Naive thymus-derived CD8-positive, alpha-beta T cell (primary cell): ENCODE measurements at regions of chrX and their contacts with region 1.

Region 1: GRCh38 chrX:107627838-107628661 is at the start of gene PRPS1:
- DNase-seq: peak; percentile 69 to 94 (median 86)
- ATAC-seq: peak; percentile 95 to 96
- H3K4me3 Mint-ChIP-seq: peak within 1 kb of the TSS; percentile 87 to 97 (median 94)
- H3K27ac Mint-ChIP-seq: peak within 1 kb of the TSS; percentile 87 to 97 (median 94)
- H3K4me1 Mint-ChIP-seq: peaks cover 8 to 41% (median 30%) of the 10 kb centered on the region in 4 donors
- H3K27me3 Mint-ChIP-seq: no peaks in the 10 kb centered on the region
- polyA plus RNA-seq, gene PRPS1: 53.8 to 61.6 (median 56.7) TPM

Region 2: GRCh38 chrX:107672955-107673378 is 44.9 kb after region 1 on chrX:
- POLR2A ChIA-PET with region 1: interaction called, 11 read pairs
- DNase-seq: peak; percentile 52 to 94 (median 86)
- ATAC-seq: peak; percentile 28 to 51
- H3K4me3 Mint-ChIP-seq: peak overlapping the region; percentile 70 to 94 (median 84)
- H3K27ac Mint-ChIP-seq: peak overlapping the region; percentile 91 to 100 (median 98)
- H3K4me1 Mint-ChIP-seq: peaks cover 17 to 60% (median 52%) of the 10 kb centered on the region in 4 donors
- H3K27me3 Mint-ChIP-seq: peaks cover 0 to 2% (median 0%) of the 10 kb centered on the region in 5 donors

Region 3: DNA sequence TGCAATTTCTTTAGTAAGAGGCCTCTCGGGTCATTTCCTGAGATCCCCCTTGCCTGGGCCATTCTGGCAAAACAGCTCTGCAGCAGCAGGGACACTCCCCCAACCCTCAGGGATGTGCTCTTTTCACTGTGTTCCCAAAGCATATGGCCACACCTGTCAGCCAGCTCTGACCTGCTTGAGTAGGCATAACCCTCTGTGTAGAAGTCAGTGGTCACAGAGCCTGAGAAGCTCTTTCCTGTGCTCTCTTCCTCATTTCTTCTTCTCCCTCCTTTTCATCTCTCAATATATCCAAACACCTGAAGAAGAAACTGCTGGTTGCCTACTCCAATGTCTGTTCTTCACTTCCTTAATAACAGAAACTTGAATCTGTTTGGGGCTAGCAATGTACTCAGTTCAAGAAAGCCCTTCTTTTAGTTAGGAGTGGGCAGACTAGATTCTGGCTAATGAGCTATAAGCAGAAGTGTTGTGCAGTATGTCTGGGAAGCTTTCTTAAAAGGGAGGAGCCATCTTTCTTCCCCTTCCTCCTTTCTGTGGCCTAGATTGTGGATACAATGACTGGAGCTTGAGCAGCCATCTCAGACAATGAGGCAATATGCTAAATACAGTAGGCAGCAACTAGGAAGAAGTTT is 73.6 kb after region 1 on chrX:
- POLR2A ChIA-PET with region 1: no interaction called
- DNase-seq: no peak
- ATAC-seq: peak in 1 of 2 donors; percentile 37
- H3K4me3 Mint-ChIP-seq: no peak overlapping the region
- H3K27ac Mint-ChIP-seq: peak overlapping the region in 3 of 10 donors; percentile 13 to 74 (median 38)
- H3K4me1 Mint-ChIP-seq: peaks cover 12 to 33% (median 25%) of the 10 kb centered on the region in 4 donors
- H3K27me3 Mint-ChIP-seq: no peaks in the 10 kb centered on the region

Region 4: GRCh38 chrX:107826238-107827029 is 198.4 kb after region 1 on chrX:
- POLR2A ChIA-PET with region 1: interaction called, 12 read pairs
- DNase-seq: peak in 8 of 10 donors; percentile 16 to 67 (median 38)
- ATAC-seq: peak; percentile 69 to 82
- H3K4me3 Mint-ChIP-seq: peak overlapping the region; percentile 79 to 93 (median 90)
- H3K27ac Mint-ChIP-seq: peak overlapping the region; percentile 58 to 95 (median 87)
- H3K4me1 Mint-ChIP-seq: peaks cover 16 to 55% (median 48%) of the 10 kb centered on the region in 4 donors
- H3K27me3 Mint-ChIP-seq: peaks cover 0 to 4% (median 0%) of the 10 kb centered on the region in 5 donors